Caco-2 (cell line): ENCODE measurements at regions of chr5 and their contacts with region 1.

Region 1: GRCh38 chr5:177403792-177404640 is 3.6 kb upstream of the PFN3 start:
- DNase-seq: peak; percentile 87 to 89
- H3K4me3 ChIP-seq: peak overlapping the region; percentile 88
- H3K4me3 Mint-ChIP-seq: peak overlapping the region; percentile 93
- H3K27ac Mint-ChIP-seq: peak overlapping the region; percentile 59
- H3K4me1 ChIP-seq: peaks cover 6% of the 10 kb centered on the region
- H3K4me1 Mint-ChIP-seq: peaks cover 6% of the 10 kb centered on the region
- H3K27me3 ChIP-seq: no peaks in the 10 kb centered on the region
- H3K27me3 Mint-ChIP-seq: no peaks in the 10 kb centered on the region
- CTCF ChIP-seq: peak; percentile 65 to 86

Region 2: DNA sequence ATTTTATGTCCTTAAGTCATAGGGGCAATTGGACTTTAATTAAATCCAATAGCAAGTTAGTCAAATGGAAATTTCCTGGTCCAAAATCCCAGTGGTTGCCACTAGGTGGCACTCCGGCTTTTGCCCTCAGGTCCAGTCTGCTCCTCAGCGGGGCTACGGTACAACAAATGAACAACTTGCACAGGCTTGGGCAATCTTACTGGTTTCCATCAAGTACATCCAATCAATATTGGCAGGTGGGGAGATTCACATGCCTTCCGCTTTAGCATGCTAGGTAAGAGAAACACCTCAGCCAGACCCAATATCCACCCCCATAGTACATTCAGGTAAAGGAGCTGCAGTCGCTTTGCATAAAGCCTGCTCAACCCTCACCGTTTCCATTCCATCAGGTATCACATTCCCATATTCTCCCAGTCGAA is 86.0 kb before region 1 on chr5:
- CTCF ChIA-PET with region 1: no interaction called
- POLR2A ChIA-PET with region 1: no interaction called
- intact Hi-C with region 1: loop called (anchors 1 kb)
- DNase-seq: peak; percentile 83 to 84
- H3K4me3 ChIP-seq: no peak overlapping the region
- H3K4me3 Mint-ChIP-seq: no peak overlapping the region
- H3K27ac Mint-ChIP-seq: peak overlapping the region; percentile 42
- H3K4me1 ChIP-seq: no peaks in the 10 kb centered on the region
- H3K4me1 Mint-ChIP-seq: peaks cover 10% of the 10 kb centered on the region
- H3K27me3 ChIP-seq: no peaks in the 10 kb centered on the region
- H3K27me3 Mint-ChIP-seq: no peaks in the 10 kb centered on the region
- CTCF ChIP-seq: peak; percentile 92 to 93

Region 3: DNA sequence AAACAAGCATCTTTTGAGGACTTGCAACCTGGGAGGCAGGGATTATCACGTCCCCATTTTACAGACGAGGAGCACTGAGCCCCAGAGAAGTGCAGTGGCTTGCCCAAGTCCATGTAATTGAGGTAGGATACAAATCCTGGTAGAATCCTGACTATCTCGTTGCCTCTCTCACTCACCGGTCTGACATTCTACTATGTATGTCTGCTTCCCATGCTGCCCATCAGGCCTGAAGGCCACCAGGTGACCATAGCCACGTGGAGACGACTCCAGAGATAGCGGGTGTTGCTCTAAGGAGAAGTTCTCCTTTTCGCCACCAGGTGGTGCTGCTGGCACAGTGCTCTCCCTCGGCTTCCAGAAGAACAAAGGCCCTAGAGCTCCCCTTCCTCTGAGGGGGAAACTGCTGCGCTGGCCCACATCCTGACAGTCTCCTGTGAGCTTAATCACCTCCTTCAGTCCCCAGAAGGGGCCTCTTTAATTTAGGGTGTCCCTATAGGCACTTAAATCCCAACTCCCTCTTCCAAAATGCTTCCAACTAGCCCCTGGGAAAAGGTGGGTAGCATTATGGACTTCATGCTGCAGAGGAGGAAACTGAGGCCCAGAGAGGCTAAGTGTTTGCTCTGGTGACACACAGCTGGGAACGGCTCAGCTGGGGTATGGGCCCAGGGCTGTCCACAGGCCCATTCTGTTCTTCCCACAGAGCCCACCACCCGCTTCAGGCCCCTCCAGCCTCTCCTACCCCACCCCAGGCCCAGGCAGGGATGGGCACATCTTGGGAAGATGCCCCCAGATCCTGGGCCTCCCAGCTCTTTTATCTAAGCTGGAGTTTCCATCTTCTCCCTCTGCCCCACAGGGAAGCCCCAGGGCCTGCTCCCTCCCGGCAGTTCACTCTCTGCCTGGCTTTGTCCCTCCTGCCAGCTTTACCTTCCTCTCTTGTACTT is 13.4 kb before region 1 on chr5:
- CTCF ChIA-PET with region 1: interaction called, 148 read pairs
- POLR2A ChIA-PET with region 1: interaction called, 13 read pairs
- intact Hi-C with region 1: loop called (anchors 1 kb)
- DNase-seq: peak; percentile 89 to 92
- H3K4me3 ChIP-seq: no peak overlapping the region
- H3K4me3 Mint-ChIP-seq: peak overlapping the region; percentile 43
- H3K27ac Mint-ChIP-seq: peak overlapping the region; percentile 53
- H3K4me1 ChIP-seq: peaks cover 22% of the 10 kb centered on the region
- H3K4me1 Mint-ChIP-seq: peaks cover 16% of the 10 kb centered on the region
- H3K27me3 ChIP-seq: no peaks in the 10 kb centered on the region
- H3K27me3 Mint-ChIP-seq: peaks cover 3% of the 10 kb centered on the region
- CTCF ChIP-seq: peak; percentile 92 to 98

Region 4: GRCh38 chr5:177446200-177447065 is 42.4 kb after region 1 on chr5 and contains the start of gene PRR7:
- CTCF ChIA-PET with region 1: interaction called, 110 read pairs
- POLR2A ChIA-PET with region 1: interaction called, 4 read pairs
- intact Hi-C with region 1: loop called (anchors 2 kb)
- DNase-seq: peak; percentile 70 to 84
- H3K4me3 ChIP-seq: peak within 1 kb of the TSS; percentile 78
- H3K4me3 Mint-ChIP-seq: peak within 1 kb of the TSS; percentile 70
- H3K27ac Mint-ChIP-seq: peak within 1 kb of the TSS; percentile 56
- H3K4me1 ChIP-seq: peaks cover 6% of the 10 kb centered on the region; the same call in 1 of the 2 replicates
- H3K4me1 Mint-ChIP-seq: peaks cover 8% of the 10 kb centered on the region
- H3K27me3 ChIP-seq: no peaks in the 10 kb centered on the region
- H3K27me3 Mint-ChIP-seq: peaks cover 6% of the 10 kb centered on the region
- CTCF ChIP-seq: no peak
- total RNA-seq, gene PRR7: 4.7 and 5.7 TPM in 2 replicates

Region 5: GRCh38 chr5:177497292-177498033 is 93.4 kb after region 1 on chr5 and contains the start of gene PDLIM7:
- CTCF ChIA-PET with region 1: interaction called, 15 read pairs
- POLR2A ChIA-PET with region 1: no interaction called
- intact Hi-C with region 1: loop called (anchors 1 kb)
- DNase-seq: peak; percentile 97 to 98
- H3K4me3 ChIP-seq: peak within 1 kb of the TSS; percentile 85
- H3K4me3 Mint-ChIP-seq: peak within 1 kb of the TSS; percentile 89
- H3K27ac Mint-ChIP-seq: peak within 1 kb of the TSS; percentile 63
- H3K4me1 ChIP-seq: peaks cover 25% of the 10 kb centered on the region
- H3K4me1 Mint-ChIP-seq: peaks cover 27% of the 10 kb centered on the region
- H3K27me3 ChIP-seq: no peaks in the 10 kb centered on the region
- H3K27me3 Mint-ChIP-seq: peaks cover 11% of the 10 kb centered on the region
- CTCF ChIP-seq: peak in 1 of 2 experiments; percentile 26
- total RNA-seq, gene PDLIM7: 49.1 and 56.8 TPM in 2 replicates